ENCODE measurements at regions of chr2 and their contacts with region 1.

Region 1: GRCh38 chr2:55419679-55420438 is at the start of gene CCDC88A:
- DNase-seq: peak; percentile 78
- H3K4me3 Mint-ChIP-seq: peak within 1 kb of the TSS; percentile 89
- H3K27ac Mint-ChIP-seq: peak within 1 kb of the TSS; percentile 50
- H3K4me1 Mint-ChIP-seq: peaks cover 23% of the 10 kb centered on the region
- H3K27me3 Mint-ChIP-seq: peaks cover 25% of the 10 kb centered on the region
- total RNA-seq, gene CCDC88A: 6.4 and 8.4 TPM in 2 replicates

Region 2: DNA sequence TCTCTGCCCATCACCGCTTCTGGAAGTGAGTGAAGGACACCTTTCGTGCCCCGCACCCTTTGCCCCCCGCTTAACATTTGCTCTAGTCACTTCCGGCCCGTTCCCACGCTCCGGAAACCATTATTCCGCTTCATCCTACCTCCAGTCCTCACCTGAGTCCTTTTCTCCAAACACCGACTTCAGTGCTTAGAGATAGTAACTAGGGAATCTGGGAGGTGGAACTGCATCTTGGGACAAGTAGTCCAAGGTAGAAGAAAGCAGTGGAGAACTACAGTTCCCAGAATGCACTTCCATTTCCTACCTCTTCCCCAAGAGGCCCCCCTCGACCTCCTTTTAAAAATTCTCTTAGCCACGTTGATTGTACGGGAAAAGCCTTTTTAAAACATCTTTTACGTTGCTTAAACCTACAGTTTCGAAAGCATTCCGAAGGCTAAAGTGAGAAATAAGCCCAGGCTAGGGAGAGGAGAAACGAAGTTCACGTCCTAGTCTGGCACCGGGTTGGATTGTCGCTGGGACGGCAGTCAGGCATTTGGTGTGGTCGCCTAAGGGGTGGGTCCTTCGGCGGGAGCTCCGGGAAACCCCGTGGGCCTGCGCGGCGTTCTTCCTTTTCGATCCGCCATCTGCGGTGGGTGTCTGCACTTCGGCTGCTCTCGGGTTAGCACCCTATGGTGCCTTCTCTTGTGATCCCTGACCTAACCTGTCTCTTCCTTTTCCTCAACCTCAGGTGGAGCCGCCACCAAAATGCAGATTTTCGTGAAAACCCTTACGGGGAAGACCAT is 187.6 kb before region 1 on chr2 and contains the starts of genes CLHC1 and RPS27A:
- intact Hi-C with region 1: loop called (anchors 2 kb)
- DNase-seq: peak; percentile 89
- H3K4me3 Mint-ChIP-seq: peak within 1 kb of the TSS; percentile 100
- H3K27ac Mint-ChIP-seq: peak within 1 kb of the TSS; percentile 97
- H3K4me1 Mint-ChIP-seq: peaks cover 63% of the 10 kb centered on the region
- H3K27me3 Mint-ChIP-seq: no peaks in the 10 kb centered on the region
- total RNA-seq, gene CLHC1: 9.0 and 12.3 TPM in 2 replicates
- total RNA-seq, gene RPS27A: 949 and 953 TPM in 2 replicates

Region 3: GRCh38 chr2:55282110-55282917 is 137.5 kb before region 1 on chr2:
- intact Hi-C with region 1: loop called (anchors 1 kb)
- DNase-seq: peak; percentile 85
- H3K4me3 Mint-ChIP-seq: peak overlapping the region; percentile 89
- H3K27ac Mint-ChIP-seq: peak overlapping the region; percentile 93
- H3K4me1 Mint-ChIP-seq: peaks cover 12% of the 10 kb centered on the region
- H3K27me3 Mint-ChIP-seq: peaks cover 2% of the 10 kb centered on the region

Region 4: GRCh38 chr2:55431982-55432627 is 12.2 kb after region 1 on chr2:
- intact Hi-C with region 1: loop called (anchors 1 kb)
- DNase-seq: no peak
- H3K4me3 Mint-ChIP-seq: no peak overlapping the region
- H3K27ac Mint-ChIP-seq: no peak overlapping the region
- H3K4me1 Mint-ChIP-seq: peaks cover 11% of the 10 kb centered on the region
- H3K27me3 Mint-ChIP-seq: peaks cover 9% of the 10 kb centered on the region